Activated T-helper 2 cell treated with anti-CD3 and anti-CD28 coated beads, Interferon-gamma antibody, Interleukin-2, Interleukin-4, amounts not matched to agents 10 μg/mL and 5 μg/mL and 100 μg/mL, durations not matched to agents 14 hours and 24 hours and 36 hours (primary cell): ENCODE measurements at regions of chr16 and their contacts with region 1.

Region 1: DNA sequence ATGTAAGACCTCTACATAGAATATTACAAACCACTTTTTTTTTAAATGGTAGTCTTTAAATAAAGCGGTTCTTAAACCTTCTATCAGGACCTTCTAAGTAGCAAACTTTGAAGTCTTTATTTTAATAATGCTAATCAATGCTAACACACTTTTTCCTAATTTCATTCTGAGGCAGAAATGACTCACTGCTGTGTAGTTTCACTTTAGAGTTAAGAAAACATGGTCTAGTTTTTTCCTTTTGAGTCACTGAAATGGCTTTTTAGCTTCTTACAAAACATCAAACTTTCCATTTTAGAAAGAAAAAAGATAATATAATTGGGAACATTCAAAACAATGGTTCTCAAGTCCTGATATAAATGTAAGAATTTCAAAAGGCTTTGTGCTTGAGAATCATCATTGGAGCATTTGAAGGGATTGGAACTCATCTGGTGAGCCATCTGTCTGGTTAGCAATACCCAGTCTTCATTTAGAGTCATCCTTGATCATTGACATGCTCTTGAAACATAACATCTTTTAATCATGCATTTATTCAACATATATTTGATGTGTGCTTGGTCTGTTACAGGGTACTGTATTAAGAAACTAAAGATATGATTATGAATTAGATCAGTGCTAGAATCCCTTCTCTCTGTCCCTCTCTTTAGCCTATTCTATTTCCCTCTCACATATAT is 258.3 kb upstream of the MON1B start:
- DNase-seq: no peak
- H3K4me3 Mint-ChIP-seq: no peak overlapping the region
- H3K27ac Mint-ChIP-seq: no peak overlapping the region
- H3K4me1 Mint-ChIP-seq: peaks cover 2% of the 10 kb centered on the region
- H3K27me3 Mint-ChIP-seq: peaks cover 3% of the 10 kb centered on the region

Region 2: GRCh38 chr16:76800196-76800595 is 132.5 kb before region 1 on chr16:
- intact Hi-C with region 1: loop called (anchors 1 kb)
- DNase-seq: no peak
- H3K4me3 Mint-ChIP-seq: no peak overlapping the region
- H3K27ac Mint-ChIP-seq: no peak overlapping the region
- H3K4me1 Mint-ChIP-seq: peaks cover 3% of the 10 kb centered on the region
- H3K27me3 Mint-ChIP-seq: no peaks in the 10 kb centered on the region

Region 3: DNA sequence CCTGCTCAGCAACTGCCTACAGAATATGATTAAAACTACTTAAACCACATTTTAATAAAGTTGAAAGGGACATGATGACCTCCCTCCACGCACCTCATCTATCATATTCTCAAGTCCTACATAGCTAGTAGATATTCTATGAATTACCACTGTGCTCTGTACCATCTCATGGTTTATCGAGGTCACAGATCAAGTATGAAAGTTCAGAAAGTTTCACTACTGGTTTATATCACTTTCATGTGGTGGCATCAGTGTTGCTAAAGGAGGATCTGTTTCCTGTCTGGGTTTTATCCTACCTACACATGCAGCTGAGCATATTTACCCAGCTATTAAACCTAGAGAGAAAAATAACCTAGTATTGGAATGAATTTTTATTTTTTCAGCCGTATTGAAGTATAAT is 43.4 kb after region 1 on chr16:
- intact Hi-C with region 1: loop called (anchors 1 kb)
- DNase-seq: no peak
- H3K4me3 Mint-ChIP-seq: no peak overlapping the region
- H3K27ac Mint-ChIP-seq: no peak overlapping the region
- H3K4me1 Mint-ChIP-seq: peaks cover 3% of the 10 kb centered on the region
- H3K27me3 Mint-ChIP-seq: peaks cover 7% of the 10 kb centered on the region

Region 4: GRCh38 chr16:78184238-78185183 is 1251.8 kb after region 1 on chr16:
- intact Hi-C with region 1: no loop called
- DNase-seq: no peak
- H3K4me3 Mint-ChIP-seq: no peak overlapping the region
- H3K27ac Mint-ChIP-seq: no peak overlapping the region
- H3K4me1 Mint-ChIP-seq: no peaks in the 10 kb centered on the region
- H3K27me3 Mint-ChIP-seq: no peaks in the 10 kb centered on the region